ENCODE measurements at regions of chr1 and their contacts with region 1.

Region 1: GRCh38 chr1:2044510-2045319 is 5.5 kb upstream of the PRKCZ start:
- DNase-seq: peak; percentile 86
- ATAC-seq: peak; percentile 84
- H3K4me3 ChIP-seq: peak overlapping the region in 3 of 5 experiments; percentile 29 to 47 (median 35)
- H3K4me3 Mint-ChIP-seq: peak overlapping the region; percentile 67
- H3K27ac ChIP-seq: no peak overlapping the region
- H3K27ac Mint-ChIP-seq: no peak overlapping the region
- H3K4me1 ChIP-seq: peaks cover 19 to 26% of the 10 kb centered on the region in 2 donors
- H3K4me1 Mint-ChIP-seq: peaks cover 27% of the 10 kb centered on the region
- H3K27me3 ChIP-seq: peaks cover 0 to 39% (median 15%) of the 10 kb centered on the region in 4 experiments
- H3K27me3 Mint-ChIP-seq: peaks cover 14% of the 10 kb centered on the region
- CTCF ChIP-seq: peak; percentile 90

Region 2: DNA sequence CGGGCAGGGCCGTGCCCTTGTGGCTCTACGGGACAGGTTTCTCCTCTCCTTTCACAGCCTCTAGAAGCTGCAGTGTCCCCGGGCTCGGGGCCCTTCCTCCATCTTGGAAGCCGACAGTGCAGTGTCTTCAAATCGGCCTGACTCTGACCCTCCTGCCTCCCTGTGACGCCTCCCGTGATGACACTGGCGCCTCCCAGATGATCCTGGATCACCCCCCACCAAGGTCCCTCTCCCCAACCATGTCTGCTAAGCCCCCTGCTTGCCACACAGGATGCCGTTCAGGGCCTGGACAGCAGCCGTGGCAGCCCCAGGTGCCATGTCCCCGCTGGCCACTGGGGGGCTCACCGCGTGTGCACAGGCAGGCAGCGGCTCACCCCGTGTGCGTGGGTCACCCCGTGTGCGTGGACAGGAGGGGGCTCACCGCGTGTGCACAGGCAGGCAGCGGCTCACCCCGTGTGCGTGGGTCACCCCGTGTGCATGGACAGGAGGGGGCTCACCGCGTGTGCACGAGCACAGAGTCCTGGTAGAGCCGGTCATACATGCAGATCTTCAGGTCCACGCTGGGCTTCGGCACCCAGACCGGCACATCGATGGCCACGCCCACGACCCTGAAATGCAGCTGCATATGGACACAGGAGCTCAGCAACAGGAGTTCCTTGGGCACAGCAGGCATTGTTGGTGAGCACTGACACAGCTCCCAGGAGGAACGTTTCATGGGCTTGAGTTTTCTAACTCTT is 100.7 kb before region 1 on chr1:
- CTCF ChIA-PET with region 1: interaction called, 30 read pairs
- POLR2A ChIA-PET with region 1: no interaction called
- intact Hi-C with region 1: loop called (anchors 1 kb)
- DNase-seq: peak; percentile 68
- ATAC-seq: peak; percentile 90
- H3K4me3 ChIP-seq: no peak overlapping the region
- H3K4me3 Mint-ChIP-seq: peak overlapping the region; percentile 56
- H3K27ac ChIP-seq: no peak overlapping the region
- H3K27ac Mint-ChIP-seq: no peak overlapping the region
- H3K4me1 ChIP-seq: peaks cover 2 to 8% of the 10 kb centered on the region in 2 donors
- H3K4me1 Mint-ChIP-seq: peaks cover 8% of the 10 kb centered on the region
- H3K27me3 ChIP-seq: peaks cover 0 to 7% (median 0%) of the 10 kb centered on the region in 4 experiments
- H3K27me3 Mint-ChIP-seq: peaks cover 3% of the 10 kb centered on the region
- CTCF ChIP-seq: peak; percentile 91

Region 3: GRCh38 chr1:1959840-1960479 is 84.8 kb before region 1 on chr1:
- CTCF ChIA-PET with region 1: interaction called, 10 read pairs
- POLR2A ChIA-PET with region 1: no interaction called
- intact Hi-C with region 1: no loop called
- DNase-seq: peak; percentile 47
- ATAC-seq: peak; percentile 24
- H3K4me3 ChIP-seq: no peak overlapping the region
- H3K4me3 Mint-ChIP-seq: no peak overlapping the region
- H3K27ac ChIP-seq: no peak overlapping the region
- H3K27ac Mint-ChIP-seq: no peak overlapping the region
- H3K4me1 ChIP-seq: no peaks in the 10 kb centered on the region
- H3K4me1 Mint-ChIP-seq: no peaks in the 10 kb centered on the region
- H3K27me3 ChIP-seq: peaks cover 0 to 33% (median 1%) of the 10 kb centered on the region in 4 experiments
- H3K27me3 Mint-ChIP-seq: peaks cover 32% of the 10 kb centered on the region
- CTCF ChIP-seq: peak; percentile 47